MCF 10A (cell line): ENCODE measurements at regions of chr20 and their contacts with region 1.

Region 1: DNA sequence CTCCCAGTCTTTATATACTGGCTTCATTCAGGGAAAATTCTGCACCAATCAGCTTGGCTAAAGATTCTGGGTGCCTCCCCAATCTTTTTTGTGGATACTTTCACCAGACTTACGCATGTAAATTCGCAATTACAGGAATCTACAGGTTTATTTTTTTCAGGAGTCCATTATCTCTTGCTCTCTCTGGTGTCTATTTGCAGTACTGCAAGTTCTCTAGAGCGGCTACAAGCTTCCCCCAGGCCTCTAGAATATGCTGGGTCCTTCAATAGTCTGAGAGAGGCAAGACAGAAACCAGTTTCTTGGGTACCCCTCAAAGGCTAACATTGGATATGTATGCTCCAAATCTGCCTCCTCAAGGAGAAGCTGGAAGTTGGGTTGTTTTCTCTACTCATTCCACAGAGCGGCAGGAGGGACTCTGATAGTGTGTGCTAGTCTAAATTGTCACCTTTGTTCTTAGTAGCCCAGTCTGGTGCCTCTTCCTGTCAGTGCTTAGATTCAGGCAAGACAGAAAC is 58.5 kb downstream of the SUN5 start:
- DNase-seq: peak; percentile 39
- H3K4me3 Mint-ChIP-seq: no peak overlapping the region
- H3K27ac Mint-ChIP-seq: no peak overlapping the region
- H3K4me1 Mint-ChIP-seq: no peaks in the 10 kb centered on the region
- H3K27me3 Mint-ChIP-seq: peaks cover 94% of the 10 kb centered on the region
- CTCF ChIP-seq: peak; percentile 55

Region 2: GRCh38 chr20:32718731-32719348 is 226.9 kb before region 1 on chr20:
- CTCF ChIA-PET with region 1: no interaction called
- POLR2A ChIA-PET with region 1: no interaction called
- intact Hi-C with region 1: no loop called
- DNase-seq: no peak
- H3K4me3 Mint-ChIP-seq: no peak overlapping the region
- H3K27ac Mint-ChIP-seq: no peak overlapping the region
- H3K4me1 Mint-ChIP-seq: no peaks in the 10 kb centered on the region
- H3K27me3 Mint-ChIP-seq: no peaks in the 10 kb centered on the region
- CTCF ChIP-seq: no peak

Region 3: DNA sequence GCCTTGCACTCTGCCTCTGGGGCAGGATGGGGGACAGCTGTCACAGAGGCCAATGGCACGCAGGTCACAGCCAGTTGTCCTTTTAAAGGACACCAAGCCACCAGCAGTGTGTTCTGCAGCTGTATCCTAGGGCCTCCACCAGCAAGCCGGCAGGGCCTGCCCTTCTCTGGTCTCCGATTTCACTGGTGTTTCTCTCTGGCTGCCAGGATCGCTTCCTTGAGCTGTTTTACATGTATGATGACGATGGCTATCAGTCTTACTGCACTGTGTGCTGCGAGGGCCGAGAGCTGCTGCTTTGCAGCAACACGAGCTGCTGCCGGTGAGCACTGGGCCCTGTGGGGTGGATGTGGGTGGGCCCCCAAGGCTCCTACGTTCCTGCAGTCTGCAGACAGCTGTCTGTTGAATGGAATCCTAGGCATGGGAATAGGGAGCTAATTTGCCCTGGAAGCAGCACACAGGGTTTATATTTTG is 148.8 kb before region 1 on chr20:
- CTCF ChIA-PET with region 1: interaction called, 21 read pairs
- POLR2A ChIA-PET with region 1: no interaction called
- intact Hi-C with region 1: no loop called
- DNase-seq: no peak
- H3K4me3 Mint-ChIP-seq: no peak overlapping the region
- H3K27ac Mint-ChIP-seq: no peak overlapping the region
- H3K4me1 Mint-ChIP-seq: no peaks in the 10 kb centered on the region
- H3K27me3 Mint-ChIP-seq: no peaks in the 10 kb centered on the region
- CTCF ChIP-seq: no peak

Region 4: GRCh38 chr20:32922466-32922865 is 23.3 kb before region 1 on chr20:
- CTCF ChIA-PET with region 1: interaction called, 12 read pairs
- POLR2A ChIA-PET with region 1: no interaction called
- intact Hi-C with region 1: no loop called
- DNase-seq: no peak
- H3K4me3 Mint-ChIP-seq: no peak overlapping the region
- H3K27ac Mint-ChIP-seq: no peak overlapping the region
- H3K4me1 Mint-ChIP-seq: no peaks in the 10 kb centered on the region
- H3K27me3 Mint-ChIP-seq: peaks cover 37% of the 10 kb centered on the region
- CTCF ChIP-seq: no peak